ENCODE measurements at regions of chr9 and their contacts with region 1.

Region 1: GRCh38 chr9:93302551-93303257 is 118.8 kb downstream of the WNK2 start:
- DNase-seq: peak; percentile 60
- H3K4me3 ChIP-seq: no peak overlapping the region
- H3K27ac ChIP-seq: no peak overlapping the region
- H3K4me1 ChIP-seq: no peaks in the 10 kb centered on the region
- H3K27me3 ChIP-seq: no peaks in the 10 kb centered on the region
- CTCF ChIP-seq: peak; percentile 59

Region 2: DNA sequence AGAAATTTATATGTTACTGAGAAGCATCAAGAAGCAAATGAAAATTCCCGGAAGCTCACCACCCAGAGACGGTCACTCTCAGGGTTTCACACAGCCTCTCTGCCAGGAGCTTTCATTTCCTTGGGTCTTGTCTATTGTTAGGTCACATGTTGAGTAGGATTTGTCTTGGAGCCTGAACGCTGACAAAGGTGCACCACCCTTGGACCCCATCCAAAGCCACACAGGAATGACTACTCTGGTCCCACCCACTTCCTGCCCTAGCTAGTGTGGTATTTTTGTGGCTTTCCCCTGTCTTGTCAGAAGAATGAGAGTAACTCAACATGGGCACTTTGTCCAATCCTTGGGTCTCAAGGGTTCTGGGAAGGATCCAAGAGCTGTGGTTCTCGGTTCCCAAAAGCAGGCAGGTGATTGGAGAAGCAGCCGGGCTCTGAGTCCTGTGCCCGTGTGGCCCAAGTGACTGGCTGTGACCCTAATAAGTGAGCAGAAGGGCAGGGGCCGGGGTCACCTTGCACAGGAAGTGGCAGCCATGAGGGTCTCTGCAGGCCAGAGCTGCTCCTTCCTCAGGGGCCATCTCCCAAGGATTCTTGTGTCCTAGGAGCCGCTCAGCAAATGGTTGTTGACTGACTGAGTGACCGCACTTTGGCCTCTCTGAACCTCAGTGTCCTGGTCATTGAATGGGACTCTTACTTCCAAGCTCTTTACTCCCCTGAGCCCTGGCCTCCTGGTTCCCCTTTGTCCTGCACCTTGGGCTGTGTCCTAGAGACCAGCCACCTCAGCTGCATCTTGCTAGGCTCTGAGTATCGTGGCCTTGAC is 348.4 kb before region 1 on chr9:
- CTCF ChIA-PET with region 1: no interaction called
- POLR2A ChIA-PET with region 1: no interaction called
- intact Hi-C with region 1: loop called (anchors 10 kb)
- DNase-seq: no peak
- H3K4me3 ChIP-seq: no peak overlapping the region
- H3K27ac ChIP-seq: no peak overlapping the region
- H3K4me1 ChIP-seq: peaks cover 4% of the 10 kb centered on the region
- H3K27me3 ChIP-seq: no peaks in the 10 kb centered on the region
- CTCF ChIP-seq: no peak

Region 3: GRCh38 chr9:93003552-93004407 is 298.9 kb before region 1 on chr9:
- CTCF ChIA-PET with region 1: interaction called, 3 read pairs
- POLR2A ChIA-PET with region 1: no interaction called
- intact Hi-C with region 1: loop called (anchors 2 kb)
- DNase-seq: peak; percentile 62
- H3K4me3 ChIP-seq: peak overlapping the region; percentile 31
- H3K27ac ChIP-seq: no peak overlapping the region
- H3K4me1 ChIP-seq: no peaks in the 10 kb centered on the region
- H3K27me3 ChIP-seq: no peaks in the 10 kb centered on the region
- CTCF ChIP-seq: peak; percentile 79

Region 4: GRCh38 chr9:93159601-93160471 is 142.9 kb before region 1 on chr9:
- CTCF ChIA-PET with region 1: interaction called, 4 read pairs
- POLR2A ChIA-PET with region 1: no interaction called
- intact Hi-C with region 1: loop called (anchors 1 kb)
- DNase-seq: peak; percentile 69
- H3K4me3 ChIP-seq: no peak overlapping the region
- H3K27ac ChIP-seq: no peak overlapping the region
- H3K4me1 ChIP-seq: no peaks in the 10 kb centered on the region
- H3K27me3 ChIP-seq: no peaks in the 10 kb centered on the region
- CTCF ChIP-seq: peak; percentile 98

Measured in A673 (cell line).